ENCODE measurements at regions of chrX and their contacts with region 1.

Region 1: GRCh38 chrX:74382613-74383012 is 38.7 kb upstream of the SLC16A2 start:
- DNase-seq: peak; percentile 69
- H3K4me3 Mint-ChIP-seq: no peak overlapping the region
- H3K27ac Mint-ChIP-seq: no peak overlapping the region
- H3K4me1 Mint-ChIP-seq: no peaks in the 10 kb centered on the region
- H3K27me3 Mint-ChIP-seq: no peaks in the 10 kb centered on the region
- CTCF ChIP-seq: peak; percentile 75

Region 2: DNA sequence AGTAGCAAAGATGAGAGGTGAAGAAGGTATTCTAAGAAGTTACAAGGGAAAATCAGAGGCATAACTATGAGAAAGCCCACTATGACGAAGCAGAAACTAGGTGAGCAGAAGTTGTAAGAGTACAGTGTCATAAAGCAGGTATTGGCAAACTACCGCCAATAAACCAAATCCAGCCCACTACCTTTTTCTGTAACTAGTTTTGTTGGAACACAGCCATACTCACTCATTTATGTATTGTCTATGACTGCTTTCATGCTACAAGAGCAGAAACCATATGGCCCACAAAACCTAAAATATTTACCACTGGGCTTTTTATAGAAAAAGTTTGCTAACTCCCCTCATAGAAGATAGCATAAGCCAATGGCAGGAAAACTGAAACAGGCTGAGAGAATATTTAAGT is 110.4 kb before region 1 on chrX:
- CTCF ChIA-PET with region 1: no interaction called
- intact Hi-C with region 1: no loop called
- DNase-seq: no peak
- H3K4me3 Mint-ChIP-seq: no peak overlapping the region
- H3K27ac Mint-ChIP-seq: no peak overlapping the region
- H3K4me1 Mint-ChIP-seq: no peaks in the 10 kb centered on the region
- H3K27me3 Mint-ChIP-seq: no peaks in the 10 kb centered on the region
- CTCF ChIP-seq: no peak

Region 3: DNA sequence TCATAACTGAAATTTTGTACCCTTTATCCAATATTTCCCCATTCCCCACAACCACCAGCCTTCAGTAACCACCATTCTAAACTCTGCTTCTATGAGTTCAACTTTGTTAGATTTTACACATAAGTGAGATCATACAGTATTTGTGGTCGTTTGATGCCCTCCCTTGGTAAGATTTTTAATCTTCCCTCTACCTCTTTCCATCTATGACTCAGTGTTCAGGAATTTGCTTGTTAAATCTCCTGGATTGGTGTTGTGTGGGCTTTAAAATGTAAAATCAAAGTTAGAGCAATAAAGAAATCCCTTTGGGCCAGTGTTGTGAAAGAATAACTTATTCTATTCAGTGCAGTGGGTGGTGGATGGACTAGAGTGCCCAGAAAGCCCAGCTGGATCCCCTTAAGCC is 76.1 kb after region 1 on chrX:
- CTCF ChIA-PET with region 1: no interaction called
- intact Hi-C with region 1: loop called (anchors 1 kb)
- DNase-seq: no peak
- H3K4me3 Mint-ChIP-seq: no peak overlapping the region
- H3K27ac Mint-ChIP-seq: no peak overlapping the region
- H3K4me1 Mint-ChIP-seq: no peaks in the 10 kb centered on the region
- H3K27me3 Mint-ChIP-seq: peaks cover 26% of the 10 kb centered on the region
- CTCF ChIP-seq: no peak

Region 4: GRCh38 chrX:74536152-74536831 is 153.7 kb after region 1 on chrX:
- CTCF ChIA-PET with region 1: no interaction called
- intact Hi-C with region 1: loop called (anchors 5 kb)
- DNase-seq: peak; percentile 52
- H3K4me3 Mint-ChIP-seq: peak overlapping the region; percentile 63
- H3K27ac Mint-ChIP-seq: no peak overlapping the region
- H3K4me1 Mint-ChIP-seq: no peaks in the 10 kb centered on the region
- H3K27me3 Mint-ChIP-seq: peaks cover 26% of the 10 kb centered on the region
- CTCF ChIP-seq: peak; percentile 23

Region 5: DNA sequence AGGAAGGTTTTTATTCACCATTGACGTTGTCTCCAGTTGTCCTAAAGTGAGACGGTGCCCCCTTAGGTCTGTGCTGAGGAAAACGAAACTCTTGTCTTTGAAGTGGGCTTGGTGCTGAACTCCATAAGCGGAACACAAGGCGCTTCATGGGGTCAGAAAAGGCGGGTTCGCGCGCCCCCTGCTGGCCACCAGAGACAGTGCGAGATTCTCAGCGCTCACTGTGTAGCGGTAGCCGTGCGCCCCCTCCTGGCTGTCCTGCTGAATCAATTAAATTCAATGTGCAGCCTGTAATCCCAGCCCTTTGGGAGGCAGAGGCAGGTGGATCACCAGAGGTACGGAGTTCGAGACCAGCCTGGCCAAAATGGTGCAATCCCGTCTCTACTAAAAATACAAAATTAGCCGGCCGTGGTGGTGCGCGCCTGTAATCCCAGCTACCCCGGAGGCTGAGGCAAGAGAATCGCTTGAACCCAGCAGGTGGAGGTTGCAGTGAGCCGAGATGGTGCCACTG is 167.7 kb after region 1 on chrX:
- CTCF ChIA-PET with region 1: no interaction called
- intact Hi-C with region 1: loop called (anchors 1 kb)
- DNase-seq: peak; percentile 85
- H3K4me3 Mint-ChIP-seq: no peak overlapping the region
- H3K27ac Mint-ChIP-seq: no peak overlapping the region
- H3K4me1 Mint-ChIP-seq: no peaks in the 10 kb centered on the region
- H3K27me3 Mint-ChIP-seq: peaks cover 5% of the 10 kb centered on the region
- CTCF ChIP-seq: peak; percentile 99

Measured in Calu3 (cell line).